A673 (cell line): ENCODE measurements at regions of chr2 and their contacts with region 1.

Region 1: DNA sequence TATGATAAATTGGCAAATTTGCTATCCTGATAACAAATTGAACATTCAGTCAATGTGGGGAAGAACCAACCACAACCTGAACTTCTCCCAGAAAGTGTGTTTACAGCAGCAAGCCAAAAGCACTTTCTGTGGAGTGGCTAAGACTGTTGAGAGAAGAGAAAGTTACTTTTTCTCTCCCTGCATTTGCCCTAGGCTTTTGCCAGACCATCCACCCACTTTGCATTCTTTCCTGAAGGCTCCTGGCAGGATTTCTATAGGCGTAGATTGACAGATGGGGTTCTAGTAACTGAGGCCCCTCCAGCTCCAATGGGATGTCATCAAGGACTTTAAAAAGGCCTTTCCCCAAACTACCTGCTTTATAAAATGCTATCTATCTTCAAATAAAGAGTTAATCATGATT is 215.2 kb downstream of the GULP1 start:
- DNase-seq: no peak
- H3K4me3 ChIP-seq: no peak overlapping the region
- H3K27ac ChIP-seq: no peak overlapping the region
- H3K4me1 ChIP-seq: peaks cover 2% of the 10 kb centered on the region
- H3K27me3 ChIP-seq: no peaks in the 10 kb centered on the region
- CTCF ChIP-seq: no peak

Region 2: DNA sequence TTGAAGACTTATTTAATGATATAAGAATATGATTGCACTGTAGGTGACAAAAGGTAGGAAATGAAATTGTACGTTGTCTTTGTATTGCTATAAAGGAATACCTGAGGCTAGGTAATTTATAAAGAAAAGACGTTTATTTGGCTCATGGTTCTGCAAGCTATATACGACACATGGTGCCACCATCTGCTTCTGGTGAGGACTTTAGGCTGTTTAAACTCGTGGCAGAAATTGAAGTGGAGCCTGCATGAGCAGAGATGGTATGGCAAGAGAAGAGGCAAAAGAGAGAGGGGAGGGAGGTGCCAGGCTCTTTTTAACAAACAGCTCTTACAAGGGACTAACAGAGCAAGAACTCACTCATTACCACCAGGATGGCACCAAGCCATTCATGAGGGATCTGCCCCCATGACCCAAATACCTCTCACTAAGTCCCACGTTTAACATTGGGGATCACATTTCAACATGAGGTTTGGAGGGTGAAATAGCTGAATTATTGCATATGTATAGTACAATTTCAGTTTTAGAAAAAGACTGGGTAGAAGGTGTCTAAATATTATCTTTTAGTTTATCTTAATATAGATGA is 128.4 kb before region 1 on chr2:
- CTCF ChIA-PET with region 1: no interaction called
- POLR2A ChIA-PET with region 1: no interaction called
- intact Hi-C with region 1: loop called (anchors 10 kb)
- DNase-seq: no peak
- H3K4me3 ChIP-seq: no peak overlapping the region
- H3K27ac ChIP-seq: no peak overlapping the region
- H3K4me1 ChIP-seq: peaks cover 7% of the 10 kb centered on the region
- H3K27me3 ChIP-seq: no peaks in the 10 kb centered on the region
- CTCF ChIP-seq: no peak